Activated CD4-positive, alpha-beta memory T cell treated with anti-CD3 and anti-CD28 coated beads for 36 hours (primary cell): ENCODE measurements at regions of chr6 and their contacts with region 1.

Region 1: GRCh38 chr6:130020907-130021629 is 2.7 kb downstream of the L3MBTL3 start:
- DNase-seq: peak; percentile 87
- H3K4me3 Mint-ChIP-seq: peak overlapping the region; percentile 95
- H3K27ac Mint-ChIP-seq: peak overlapping the region; percentile 89
- H3K4me1 Mint-ChIP-seq: peaks cover 22% of the 10 kb centered on the region
- H3K27me3 Mint-ChIP-seq: no peaks in the 10 kb centered on the region

Region 2: DNA sequence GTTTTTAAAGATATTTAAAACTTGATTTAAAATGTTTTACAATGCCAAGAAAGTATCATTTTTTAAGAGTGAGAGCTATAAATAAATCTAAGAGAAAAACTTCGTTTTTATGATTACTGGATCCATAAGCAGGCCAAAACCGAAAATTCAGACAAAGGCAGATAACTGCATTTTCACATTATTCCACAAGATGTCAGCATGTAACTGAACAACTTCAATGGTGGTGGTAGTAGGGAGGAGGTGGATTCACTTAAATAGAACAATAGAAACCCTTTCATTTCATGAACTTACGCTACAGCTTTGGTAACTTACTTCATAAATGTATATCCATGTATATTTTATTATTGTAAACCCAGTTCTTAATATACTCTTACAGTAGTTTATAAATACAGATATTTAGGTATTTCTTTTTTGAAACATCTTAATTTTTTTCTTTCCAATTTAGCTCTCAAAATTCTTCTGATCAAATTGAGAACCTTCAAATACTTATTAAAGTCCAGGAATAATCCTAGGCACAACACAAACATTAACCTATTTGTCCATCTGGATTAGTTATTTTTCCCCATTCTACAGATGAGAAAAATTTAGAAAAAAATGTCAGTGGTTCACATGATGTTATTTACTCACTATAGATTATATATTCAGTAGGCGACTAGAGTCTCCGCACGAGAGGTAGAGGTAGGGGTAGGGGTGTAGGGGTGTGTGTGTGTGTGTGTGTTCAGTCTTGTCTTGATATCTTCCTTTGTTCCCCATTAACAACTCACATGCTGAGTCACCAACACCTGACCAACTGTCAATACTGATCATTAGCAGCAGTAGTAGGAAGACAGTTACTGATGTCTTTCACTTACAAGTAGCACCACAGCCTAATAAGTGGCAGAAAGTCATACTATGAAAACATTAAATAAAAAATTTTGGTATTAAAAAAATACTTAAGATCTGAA is 422.6 kb before region 1 on chr6:
- CTCF ChIA-PET with region 1: interaction called, 24 read pairs
- POLR2A ChIA-PET with region 1: no interaction called
- intact Hi-C with region 1: loop called (anchors 1 kb)
- DNase-seq: no peak
- H3K4me3 Mint-ChIP-seq: no peak overlapping the region
- H3K27ac Mint-ChIP-seq: no peak overlapping the region
- H3K4me1 Mint-ChIP-seq: no peaks in the 10 kb centered on the region
- H3K27me3 Mint-ChIP-seq: no peaks in the 10 kb centered on the region

Region 3: DNA sequence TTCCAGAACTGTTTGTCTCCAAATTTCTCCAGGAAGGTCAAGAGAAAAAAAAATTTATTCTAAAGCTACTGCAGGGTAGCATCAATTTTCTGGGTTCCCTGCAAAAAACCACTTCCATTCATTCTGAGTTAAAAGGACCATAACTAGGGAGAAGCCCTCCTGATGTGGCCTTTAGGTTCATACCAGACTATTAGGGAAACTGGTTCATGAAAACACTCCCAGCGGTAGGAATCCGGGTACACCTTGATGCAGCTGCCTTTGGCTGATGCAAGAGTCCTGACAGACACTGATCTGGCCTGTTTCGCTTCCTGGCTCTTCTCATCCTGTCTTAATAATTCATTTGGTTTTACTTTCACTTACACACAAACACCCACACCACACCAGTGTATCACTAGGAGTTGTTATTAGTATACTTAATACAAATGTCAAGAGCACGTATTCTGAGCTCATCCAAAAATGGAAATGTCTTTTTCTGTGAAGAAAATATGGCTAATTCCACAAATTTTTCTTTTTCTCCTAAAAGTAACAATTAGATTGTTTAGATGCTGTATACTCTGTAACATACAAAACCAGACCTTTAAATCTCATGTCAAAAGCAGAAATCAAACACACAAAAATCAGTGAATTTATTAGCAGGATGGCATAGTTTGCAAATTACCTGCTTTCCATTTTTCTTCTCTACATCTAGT is 272.7 kb before region 1 on chr6:
- CTCF ChIA-PET with region 1: interaction called, 15 read pairs
- POLR2A ChIA-PET with region 1: no interaction called
- intact Hi-C with region 1: loop called (anchors 2 kb)
- DNase-seq: peak; percentile 70
- H3K4me3 Mint-ChIP-seq: peak overlapping the region; percentile 63
- H3K27ac Mint-ChIP-seq: peak overlapping the region; percentile 91
- H3K4me1 Mint-ChIP-seq: peaks cover 60% of the 10 kb centered on the region
- H3K27me3 Mint-ChIP-seq: no peaks in the 10 kb centered on the region

Region 4: GRCh38 chr6:129774697-129775447 is 246.2 kb before region 1 on chr6:
- CTCF ChIA-PET with region 1: interaction called, 13 read pairs
- POLR2A ChIA-PET with region 1: no interaction called
- intact Hi-C with region 1: no loop called
- DNase-seq: peak; percentile 64
- H3K4me3 Mint-ChIP-seq: no peak overlapping the region
- H3K27ac Mint-ChIP-seq: no peak overlapping the region
- H3K4me1 Mint-ChIP-seq: no peaks in the 10 kb centered on the region
- H3K27me3 Mint-ChIP-seq: no peaks in the 10 kb centered on the region

Region 5: GRCh38 chr6:129936329-129937165 is 84.5 kb before region 1 on chr6:
- CTCF ChIA-PET with region 1: interaction called, 11 read pairs
- POLR2A ChIA-PET with region 1: no interaction called
- intact Hi-C with region 1: loop called (anchors 1 kb)
- DNase-seq: peak; percentile 44
- H3K4me3 Mint-ChIP-seq: no peak overlapping the region
- H3K27ac Mint-ChIP-seq: no peak overlapping the region
- H3K4me1 Mint-ChIP-seq: no peaks in the 10 kb centered on the region
- H3K27me3 Mint-ChIP-seq: peaks cover 12% of the 10 kb centered on the region

Region 6: GRCh38 chr6:130359736-130360135 is 338.7 kb after region 1 on chr6:
- CTCF ChIA-PET with region 1: no interaction called
- POLR2A ChIA-PET with region 1: no interaction called
- intact Hi-C with region 1: no loop called
- DNase-seq: no peak
- H3K4me3 Mint-ChIP-seq: no peak overlapping the region
- H3K27ac Mint-ChIP-seq: no peak overlapping the region
- H3K4me1 Mint-ChIP-seq: peaks cover 4% of the 10 kb centered on the region
- H3K27me3 Mint-ChIP-seq: peaks cover 4% of the 10 kb centered on the region

Region 7: DNA sequence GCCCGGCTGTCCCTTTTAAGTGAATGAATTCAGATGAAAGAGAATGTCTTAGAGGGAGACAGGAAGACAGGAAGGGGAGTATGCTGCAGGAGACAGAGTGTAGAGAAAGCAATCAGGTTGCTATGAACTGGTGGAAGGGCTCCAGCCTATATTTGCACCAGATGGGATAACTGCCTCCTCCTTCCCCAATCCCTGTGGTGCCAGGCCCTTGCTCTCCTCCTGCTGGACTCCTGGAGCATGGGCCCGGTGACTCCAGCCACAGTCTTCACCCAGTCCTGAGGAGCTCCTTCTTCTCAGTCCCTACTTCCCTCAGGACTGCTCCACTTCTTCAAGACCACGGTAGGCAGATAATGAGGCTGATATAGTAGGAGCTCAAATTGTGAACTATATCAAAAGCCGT is 436.5 kb after region 1 on chr6:
- CTCF ChIA-PET with region 1: no interaction called
- POLR2A ChIA-PET with region 1: no interaction called
- intact Hi-C with region 1: no loop called
- DNase-seq: no peak
- H3K4me3 Mint-ChIP-seq: no peak overlapping the region
- H3K27ac Mint-ChIP-seq: no peak overlapping the region
- H3K4me1 Mint-ChIP-seq: no peaks in the 10 kb centered on the region
- H3K27me3 Mint-ChIP-seq: no peaks in the 10 kb centered on the region